Vagina (tissue), 2 donors: ENCODE measurements at regions of chr1 and their contacts with region 1.

Region 1: DNA sequence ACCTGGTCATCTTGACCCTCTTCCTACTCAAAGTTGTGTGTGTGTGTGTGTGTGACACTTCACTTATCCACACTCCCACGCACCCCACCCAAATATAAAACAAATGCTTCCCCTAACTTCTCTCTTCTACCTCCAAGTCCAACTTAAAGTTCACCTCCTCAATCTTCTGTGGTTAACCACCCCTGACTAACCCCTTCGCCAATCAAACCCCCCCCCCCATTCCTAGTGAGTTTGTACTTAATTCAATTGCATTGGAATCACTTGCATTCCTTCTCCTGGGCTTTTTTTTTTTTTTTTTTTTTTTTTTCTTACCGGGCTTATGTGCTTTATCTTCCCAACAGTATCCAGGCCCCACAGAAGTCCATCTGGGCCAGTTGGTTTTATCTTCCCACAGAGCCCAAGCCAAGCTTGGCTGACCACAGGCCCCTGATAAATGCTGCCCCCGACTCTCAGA is 78.4 kb downstream of the CD58 start:
- DNase-seq: no peak
- H3K4me3 ChIP-seq: no peak overlapping the region
- H3K27ac ChIP-seq: no peak overlapping the region
- H3K4me1 ChIP-seq: peaks cover 28% of the 10 kb centered on the region
- H3K27me3 ChIP-seq: no peaks in the 10 kb centered on the region
- CTCF ChIP-seq: no peak
- POLR2A ChIP-seq: no peak

Region 2: GRCh38 chr1:116151739-116152576 is 340.4 kb before region 1 on chr1:
- intact Hi-C with region 1: loop called (anchors 5 kb)
- DNase-seq: peak; percentile 87 to 93
- H3K4me3 ChIP-seq: peak overlapping the region; percentile 47 to 57
- H3K27ac ChIP-seq: peak overlapping the region; percentile 52
- H3K4me1 ChIP-seq: peaks cover 10% of the 10 kb centered on the region
- H3K27me3 ChIP-seq: no peaks in the 10 kb centered on the region
- CTCF ChIP-seq: peak; percentile 52 to 84 (median 81)
- POLR2A ChIP-seq: no peak